Calu3 (cell line): ENCODE measurements at regions of chr10 and their contacts with region 1.

Region 1: DNA sequence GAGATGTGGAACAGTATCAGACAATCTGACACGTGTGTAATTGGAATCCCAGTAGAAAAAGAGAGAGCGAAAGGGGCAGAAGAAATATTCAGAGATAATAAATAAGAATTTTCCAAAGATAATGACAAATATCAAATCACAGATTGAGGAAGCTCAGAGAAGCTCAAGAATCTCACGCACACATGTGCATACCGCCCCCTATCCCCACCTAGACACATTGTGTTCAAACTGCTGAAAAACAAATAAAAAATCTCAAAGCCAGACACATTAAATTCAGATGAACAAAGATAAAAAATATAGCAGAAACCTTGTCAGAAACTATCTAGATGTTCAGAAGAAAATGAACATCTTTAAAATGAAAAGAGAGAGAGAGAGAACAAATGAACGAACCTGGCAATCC is 17.2 kb downstream of the SFR1 start:
- DNase-seq: no peak
- H3K4me3 Mint-ChIP-seq: no peak overlapping the region
- H3K27ac Mint-ChIP-seq: no peak overlapping the region
- H3K4me1 Mint-ChIP-seq: no peaks in the 10 kb centered on the region
- H3K27me3 Mint-ChIP-seq: no peaks in the 10 kb centered on the region
- CTCF ChIP-seq: no peak

Region 2: DNA sequence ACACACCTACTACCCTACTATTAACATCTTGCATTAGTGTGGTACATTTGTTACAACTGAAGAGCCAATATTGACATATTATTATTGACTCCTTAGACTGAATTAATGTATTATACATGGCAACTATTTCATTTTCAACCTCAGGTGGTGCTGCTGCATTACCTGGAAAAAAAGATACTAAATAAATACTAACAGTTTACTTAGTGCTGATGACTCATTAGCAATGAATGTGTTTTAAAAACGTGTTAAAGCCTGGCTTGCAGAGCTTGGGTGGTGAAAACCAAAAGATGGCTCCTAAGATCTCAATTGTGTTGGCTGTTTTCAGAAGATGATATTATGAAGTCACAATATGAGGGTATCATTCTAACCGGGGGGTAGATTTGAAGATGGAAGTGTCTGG is 58.1 kb after region 1 on chr10:
- CTCF ChIA-PET with region 1: no interaction called
- intact Hi-C with region 1: loop called (anchors 5 kb)
- DNase-seq: peak; percentile 4
- H3K4me3 Mint-ChIP-seq: no peak overlapping the region
- H3K27ac Mint-ChIP-seq: no peak overlapping the region
- H3K4me1 Mint-ChIP-seq: peaks cover 4% of the 10 kb centered on the region
- H3K27me3 Mint-ChIP-seq: no peaks in the 10 kb centered on the region
- CTCF ChIP-seq: no peak